B cell (primary cell): ENCODE measurements at regions of chr3 and their contacts with region 1.

Region 1: GRCh38 chr3:142586803-142587406 is 8.4 kb upstream of the ATR start:
- DNase-seq: peak; percentile 53
- ATAC-seq: peak; percentile 64
- H3K4me3 ChIP-seq: no peak overlapping the region
- H3K4me3 Mint-ChIP-seq: no peak overlapping the region
- H3K27ac ChIP-seq: no peak overlapping the region
- H3K27ac Mint-ChIP-seq: no peak overlapping the region
- H3K4me1 ChIP-seq: no peaks in the 10 kb centered on the region
- H3K4me1 Mint-ChIP-seq: no peaks in the 10 kb centered on the region
- H3K27me3 ChIP-seq: peaks cover 0 to 6% (median 0%) of the 10 kb centered on the region in 4 experiments
- H3K27me3 Mint-ChIP-seq: peaks cover 27% of the 10 kb centered on the region
- CTCF ChIP-seq: peak; percentile 57

Region 2: DNA sequence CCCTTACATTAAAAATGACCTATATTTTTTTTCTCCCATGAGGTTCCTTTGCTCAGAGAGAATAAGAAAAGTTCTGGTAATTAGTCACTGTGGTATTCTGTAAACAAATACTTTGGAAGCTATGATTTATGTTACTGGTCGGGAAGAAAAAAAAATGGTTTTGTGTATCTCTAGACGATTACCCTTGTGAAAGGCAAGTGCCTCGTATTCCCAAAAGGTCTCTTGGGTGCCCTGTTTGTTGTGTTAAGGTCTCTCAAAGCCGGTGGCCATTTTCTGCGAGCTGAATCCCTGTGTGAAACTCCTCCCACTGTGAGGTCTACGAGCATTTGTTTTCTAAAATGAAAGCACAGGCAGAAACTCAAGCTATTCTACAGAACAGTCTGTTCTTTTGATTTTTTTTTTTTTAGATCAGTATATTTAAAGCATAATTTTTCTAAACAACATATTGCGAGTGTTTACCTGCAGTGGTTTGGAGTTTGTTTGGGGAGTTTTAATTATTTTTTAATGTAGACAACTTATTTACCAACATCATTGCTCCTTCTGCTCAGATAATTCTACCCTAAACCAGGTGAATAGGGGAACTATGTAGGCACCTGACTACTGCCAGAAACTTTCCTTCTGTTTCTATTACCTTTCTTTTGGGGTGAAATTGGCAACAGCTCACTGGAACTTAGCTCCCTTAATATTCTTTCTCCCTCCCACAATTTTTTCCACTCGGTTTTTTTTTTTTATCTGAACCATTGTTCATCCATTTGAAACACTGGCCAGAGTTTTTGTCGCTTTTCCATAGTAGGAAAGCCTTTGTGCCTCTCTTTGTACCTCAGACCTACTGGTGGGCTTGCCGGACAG is 1174.6 kb before region 1 on chr3:
- CTCF ChIA-PET with region 1: no interaction called
- POLR2A ChIA-PET with region 1: no interaction called
- intact Hi-C with region 1: no loop called
- DNase-seq: peak; percentile 78
- ATAC-seq: peak; percentile 80
- H3K4me3 ChIP-seq: peak overlapping the region in 4 of 5 experiments; percentile 7 to 59 (median 39)
- H3K4me3 Mint-ChIP-seq: peak overlapping the region; percentile 85
- H3K27ac ChIP-seq: peak overlapping the region; percentile 64 to 86
- H3K27ac Mint-ChIP-seq: peak overlapping the region; percentile 96
- H3K4me1 ChIP-seq: peaks cover 21 to 22% of the 10 kb centered on the region in 2 donors
- H3K4me1 Mint-ChIP-seq: peaks cover 42% of the 10 kb centered on the region
- H3K27me3 ChIP-seq: no peaks in the 10 kb centered on the region
- H3K27me3 Mint-ChIP-seq: no peaks in the 10 kb centered on the region
- CTCF ChIP-seq: no peak

Region 3: DNA sequence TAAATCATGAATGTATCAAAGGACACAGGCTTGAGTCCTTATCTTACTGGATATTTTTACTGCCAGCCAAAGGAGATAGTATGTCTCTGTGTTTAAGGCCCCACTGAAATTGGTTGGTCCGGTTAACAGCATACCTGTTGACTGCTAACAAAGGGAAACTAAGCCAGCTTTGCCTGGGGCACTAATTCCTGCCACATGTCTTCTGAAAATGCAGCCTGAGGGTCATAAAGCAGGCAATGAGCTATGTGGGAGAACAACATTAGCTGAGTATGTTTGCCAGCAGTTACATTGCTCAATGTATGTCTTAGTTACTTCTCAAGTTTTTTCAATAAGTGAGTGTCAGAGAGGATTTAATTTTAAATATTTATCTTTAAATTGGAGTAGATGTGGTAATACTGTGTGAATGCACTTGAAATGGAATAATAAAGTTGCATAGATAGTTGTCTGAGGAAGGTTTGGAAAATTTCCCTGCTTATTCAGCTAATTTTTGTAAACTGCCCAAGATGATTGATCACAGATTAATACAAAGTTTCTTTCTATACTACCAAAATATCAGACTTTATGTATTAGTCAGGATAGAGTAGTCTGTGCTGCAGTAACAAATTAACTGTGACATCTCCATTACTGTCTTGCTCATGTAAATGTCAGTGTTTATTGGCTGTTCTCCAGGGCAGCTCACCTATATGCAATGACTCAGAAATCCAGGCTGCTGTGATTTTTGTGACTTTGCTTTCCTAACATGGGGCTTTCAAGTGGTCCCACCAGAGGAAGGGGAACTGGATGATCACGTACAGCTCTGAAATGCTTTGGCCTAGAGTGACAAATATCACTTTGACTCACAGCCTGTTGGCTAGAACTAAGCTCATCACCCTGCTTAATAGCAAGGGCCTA is 22.0 kb after region 1 on chr3:
- CTCF ChIA-PET with region 1: no interaction called
- POLR2A ChIA-PET with region 1: no interaction called
- intact Hi-C with region 1: no loop called
- DNase-seq: no peak
- ATAC-seq: no peak
- H3K4me3 ChIP-seq: no peak overlapping the region
- H3K4me3 Mint-ChIP-seq: no peak overlapping the region
- H3K27ac ChIP-seq: no peak overlapping the region
- H3K27ac Mint-ChIP-seq: no peak overlapping the region
- H3K4me1 ChIP-seq: no peaks in the 10 kb centered on the region
- H3K4me1 Mint-ChIP-seq: no peaks in the 10 kb centered on the region
- H3K27me3 ChIP-seq: no peaks in the 10 kb centered on the region
- H3K27me3 Mint-ChIP-seq: no peaks in the 10 kb centered on the region
- CTCF ChIP-seq: no peak

Region 4: DNA sequence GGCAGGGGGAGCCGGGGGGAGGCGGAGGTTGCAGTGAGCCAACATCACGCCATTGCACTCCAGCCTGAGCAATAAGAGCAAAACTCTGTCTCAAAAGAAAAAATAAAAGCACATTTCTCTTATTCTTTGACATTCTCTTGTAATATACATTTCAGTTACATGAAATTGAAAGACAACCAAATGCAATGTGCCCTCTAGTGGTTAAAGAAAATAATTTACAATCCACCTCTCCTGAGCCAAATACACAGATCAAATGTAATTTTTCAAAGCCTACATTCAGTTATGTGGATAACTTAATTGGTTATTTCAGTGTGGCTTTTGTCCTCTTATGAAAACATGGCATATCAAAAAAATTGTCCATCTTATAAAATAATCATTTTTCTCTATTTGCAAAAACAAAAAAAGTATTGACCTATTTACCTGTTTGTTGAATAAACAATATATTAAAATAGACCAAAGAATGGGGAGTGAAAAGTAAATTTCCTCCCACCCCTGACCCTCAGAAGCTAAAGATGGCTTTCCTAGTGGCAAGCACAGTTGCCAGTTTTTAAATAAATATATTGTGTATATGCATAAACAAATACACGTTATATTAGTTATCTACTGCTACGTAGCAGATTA is 400.3 kb after region 1 on chr3:
- CTCF ChIA-PET with region 1: interaction called, 8 read pairs
- POLR2A ChIA-PET with region 1: no interaction called
- intact Hi-C with region 1: loop called (anchors 1 kb)
- DNase-seq: peak; percentile 50
- ATAC-seq: no peak
- H3K4me3 ChIP-seq: no peak overlapping the region
- H3K4me3 Mint-ChIP-seq: no peak overlapping the region
- H3K27ac ChIP-seq: no peak overlapping the region
- H3K27ac Mint-ChIP-seq: no peak overlapping the region
- H3K4me1 ChIP-seq: no peaks in the 10 kb centered on the region
- H3K4me1 Mint-ChIP-seq: no peaks in the 10 kb centered on the region
- H3K27me3 ChIP-seq: no peaks in the 10 kb centered on the region
- H3K27me3 Mint-ChIP-seq: peaks cover 5% of the 10 kb centered on the region
- CTCF ChIP-seq: peak; percentile 77

Region 5: DNA sequence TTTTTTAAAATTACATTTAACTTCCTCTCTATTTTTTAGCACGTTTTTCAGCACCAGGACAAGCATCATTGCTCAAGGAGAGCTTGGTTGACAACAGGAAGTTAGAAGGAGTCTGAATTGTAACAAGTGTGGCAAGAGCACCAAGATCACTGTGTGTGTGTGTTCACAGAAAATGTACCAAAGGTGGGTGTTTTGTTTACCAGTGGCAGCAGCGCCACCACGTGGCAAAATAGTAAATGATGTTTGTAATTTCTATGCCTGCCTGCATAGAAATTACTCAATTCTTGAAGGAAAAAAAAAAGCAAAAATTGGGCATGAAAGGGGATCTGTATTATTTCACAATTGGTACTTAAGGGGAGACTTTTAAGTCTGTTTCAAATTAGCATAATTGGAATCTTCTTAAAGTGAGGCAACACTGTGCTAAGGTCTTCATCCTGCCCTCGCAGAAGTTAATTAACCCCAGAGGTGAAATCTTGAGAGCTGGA is 407.1 kb after region 1 on chr3:
- CTCF ChIA-PET with region 1: interaction called, 7 read pairs
- POLR2A ChIA-PET with region 1: no interaction called
- intact Hi-C with region 1: loop called (anchors 1 kb)
- DNase-seq: peak; percentile 74
- ATAC-seq: peak; percentile 54
- H3K4me3 ChIP-seq: no peak overlapping the region
- H3K4me3 Mint-ChIP-seq: no peak overlapping the region
- H3K27ac ChIP-seq: peak overlapping the region in 1 of 2 donors; percentile 2
- H3K27ac Mint-ChIP-seq: peak overlapping the region; percentile 54
- H3K4me1 ChIP-seq: peaks cover 14 to 15% of the 10 kb centered on the region in 2 donors
- H3K4me1 Mint-ChIP-seq: peaks cover 15% of the 10 kb centered on the region
- H3K27me3 ChIP-seq: no peaks in the 10 kb centered on the region
- H3K27me3 Mint-ChIP-seq: no peaks in the 10 kb centered on the region
- CTCF ChIP-seq: peak; percentile 89

Region 6: DNA sequence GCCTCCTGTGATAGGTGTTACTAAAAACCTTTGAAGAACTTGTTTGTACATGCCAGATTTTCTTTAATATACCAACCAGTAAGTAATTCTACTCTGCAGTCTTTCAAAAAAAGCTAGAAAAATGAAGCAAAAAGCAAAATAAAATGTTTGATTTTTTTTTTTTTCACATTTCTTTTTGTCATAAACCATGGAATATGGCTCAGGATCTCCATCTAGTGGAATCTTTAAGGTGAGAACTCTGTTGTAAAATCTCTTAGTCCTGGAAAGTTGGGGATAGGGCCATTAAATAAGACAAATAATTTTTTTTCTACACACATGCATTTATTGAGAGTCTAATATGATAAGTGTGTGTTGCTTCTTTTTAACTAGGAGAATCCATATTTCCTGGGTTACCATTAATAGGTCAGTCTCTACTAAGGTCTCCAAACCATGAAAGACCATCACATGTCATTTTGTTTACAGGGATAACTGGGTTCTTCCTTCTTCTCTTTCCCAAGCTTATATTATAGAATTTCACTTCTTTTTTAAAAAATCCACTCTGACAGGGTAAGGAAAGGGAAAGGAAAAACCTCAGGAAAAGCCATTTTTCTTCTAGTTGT is 1176.8 kb after region 1 on chr3:
- CTCF ChIA-PET with region 1: interaction called, 3 read pairs
- POLR2A ChIA-PET with region 1: no interaction called
- intact Hi-C with region 1: loop called (anchors 5 kb)
- DNase-seq: no peak
- ATAC-seq: no peak
- H3K4me3 ChIP-seq: no peak overlapping the region
- H3K4me3 Mint-ChIP-seq: no peak overlapping the region
- H3K27ac ChIP-seq: no peak overlapping the region
- H3K27ac Mint-ChIP-seq: no peak overlapping the region
- H3K4me1 ChIP-seq: peaks cover 0 to 3% of the 10 kb centered on the region in 2 donors
- H3K4me1 Mint-ChIP-seq: peaks cover 3% of the 10 kb centered on the region
- H3K27me3 ChIP-seq: no peaks in the 10 kb centered on the region
- H3K27me3 Mint-ChIP-seq: no peaks in the 10 kb centered on the region
- CTCF ChIP-seq: no peak